Heart left ventricle (tissue), 16 donors: ENCODE measurements at regions of chr9 and their contacts with region 1.

Region 1: DNA sequence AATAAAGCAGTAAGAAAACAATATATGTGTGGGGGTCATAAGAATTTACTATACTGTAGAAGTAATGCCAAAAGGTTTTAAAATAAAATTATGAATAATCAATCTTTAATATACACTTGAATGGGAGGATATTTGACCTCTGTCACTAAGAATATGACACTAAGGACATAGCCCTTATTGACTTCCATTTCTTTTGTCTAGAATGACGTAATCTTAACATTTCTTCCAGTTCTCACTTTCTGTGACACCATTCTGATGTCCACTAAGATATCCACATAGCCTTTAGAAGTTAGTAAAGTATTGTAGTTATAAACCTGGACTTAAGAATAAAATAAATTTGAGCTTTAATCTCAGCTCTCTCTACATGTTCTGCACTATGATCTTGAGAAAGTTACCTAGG is 1050.7 kb downstream of the TLE4 start:
- DNase-seq: no peak
- ATAC-seq: no peak
- H3K4me3 ChIP-seq: no peak overlapping the region
- H3K27ac ChIP-seq: no peak overlapping the region
- H3K4me1 ChIP-seq: no peaks in the 10 kb centered on the region
- H3K27me3 ChIP-seq: no peaks in the 10 kb centered on the region
- CTCF ChIP-seq: no peak
- POLR2A ChIP-seq: no peak

Region 2: GRCh38 chr9:80586786-80587330 is 35.6 kb before region 1 on chr9:
- intact Hi-C with region 1: no loop called
- DNase-seq: no peak
- ATAC-seq: no peak
- H3K4me3 ChIP-seq: no peak overlapping the region
- H3K27ac ChIP-seq: no peak overlapping the region
- H3K4me1 ChIP-seq: no peaks in the 10 kb centered on the region
- H3K27me3 ChIP-seq: no peaks in the 10 kb centered on the region
- CTCF ChIP-seq: no peak
- POLR2A ChIP-seq: no peak

Region 3: GRCh38 chr9:80679916-80680315 is 57.4 kb after region 1 on chr9:
- intact Hi-C with region 1: loop called in 1 of 10 experiments (anchors 10 kb)
- DNase-seq: no peak
- ATAC-seq: no peak
- H3K4me3 ChIP-seq: no peak overlapping the region
- H3K27ac ChIP-seq: no peak overlapping the region
- H3K4me1 ChIP-seq: no peaks in the 10 kb centered on the region
- H3K27me3 ChIP-seq: no peaks in the 10 kb centered on the region
- CTCF ChIP-seq: no peak
- POLR2A ChIP-seq: no peak

Region 4: GRCh38 chr9:80789831-80790230 is 167.3 kb after region 1 on chr9:
- intact Hi-C with region 1: no loop called
- DNase-seq: no peak
- ATAC-seq: no peak
- H3K4me3 ChIP-seq: no peak overlapping the region
- H3K27ac ChIP-seq: no peak overlapping the region
- H3K4me1 ChIP-seq: peaks cover 0 to 7% (median 0%) of the 10 kb centered on the region in 12 donors
- H3K27me3 ChIP-seq: no peaks in the 10 kb centered on the region
- CTCF ChIP-seq: no peak
- POLR2A ChIP-seq: no peak